ENCODE measurements at regions of chr18 and their contacts with region 1.

Region 1: GRCh38 chr18:3966985-3967856 is 487.9 kb downstream of the DLGAP1 start:
- DNase-seq: peak; percentile 52
- H3K4me3 Mint-ChIP-seq: peak overlapping the region; percentile 2
- H3K27ac Mint-ChIP-seq: peak overlapping the region; percentile 43
- H3K4me1 Mint-ChIP-seq: peaks cover 27% of the 10 kb centered on the region
- H3K27me3 Mint-ChIP-seq: no peaks in the 10 kb centered on the region
- CTCF ChIP-seq: no peak

Region 2: GRCh38 chr18:3906116-3906750 is 61.0 kb before region 1 on chr18:
- CTCF ChIA-PET with region 1: no interaction called
- intact Hi-C with region 1: loop called (anchors 5 kb)
- DNase-seq: no peak
- H3K4me3 Mint-ChIP-seq: no peak overlapping the region
- H3K27ac Mint-ChIP-seq: no peak overlapping the region
- H3K4me1 Mint-ChIP-seq: peaks cover 10% of the 10 kb centered on the region
- H3K27me3 Mint-ChIP-seq: peaks cover 7% of the 10 kb centered on the region
- CTCF ChIP-seq: no peak

Measured in Calu3 (cell line).